AG04450 (cell line): ENCODE measurements at regions of chr6 and their contacts with region 1.

Region 1: DNA sequence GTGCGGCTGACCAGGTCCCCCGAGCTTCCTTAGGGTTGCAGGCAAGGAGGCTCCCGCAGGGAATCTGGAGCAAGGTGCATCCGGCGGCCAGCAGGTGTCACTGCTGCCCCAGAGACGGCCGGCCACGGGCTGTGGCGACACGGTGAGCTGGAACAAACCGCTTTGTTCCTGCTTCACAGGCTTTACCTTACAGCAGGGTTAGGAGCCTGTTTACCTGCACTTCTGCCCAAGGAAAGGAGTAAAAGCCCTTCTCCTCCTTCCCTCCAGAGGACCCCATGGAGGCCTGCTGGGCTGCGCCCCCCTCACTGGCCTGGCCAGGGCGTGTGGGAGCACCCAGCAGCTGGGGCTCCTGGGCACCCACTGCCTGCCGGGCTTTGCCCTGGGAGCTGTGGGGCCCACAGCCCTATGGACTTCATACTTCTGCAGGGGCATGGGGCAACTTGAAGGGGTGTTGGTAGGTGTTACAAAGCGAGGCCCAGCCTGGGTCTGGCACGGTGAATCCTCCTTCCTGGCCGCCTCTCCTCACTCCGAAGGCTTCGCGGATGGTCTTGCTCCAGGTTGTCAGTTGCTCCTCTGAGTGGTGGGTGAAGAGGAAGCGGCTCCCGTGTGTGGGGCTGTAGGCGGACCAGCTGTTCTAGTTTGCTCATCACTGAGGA is 88.4 kb downstream of the CDC5L start:
- DNase-seq: no peak
- H3K4me3 ChIP-seq: no peak overlapping the region
- H3K27ac ChIP-seq: no peak overlapping the region
- H3K27me3 ChIP-seq: peaks cover 26% of the 10 kb centered on the region
- CTCF ChIP-seq: peak; percentile 96

Region 2: DNA sequence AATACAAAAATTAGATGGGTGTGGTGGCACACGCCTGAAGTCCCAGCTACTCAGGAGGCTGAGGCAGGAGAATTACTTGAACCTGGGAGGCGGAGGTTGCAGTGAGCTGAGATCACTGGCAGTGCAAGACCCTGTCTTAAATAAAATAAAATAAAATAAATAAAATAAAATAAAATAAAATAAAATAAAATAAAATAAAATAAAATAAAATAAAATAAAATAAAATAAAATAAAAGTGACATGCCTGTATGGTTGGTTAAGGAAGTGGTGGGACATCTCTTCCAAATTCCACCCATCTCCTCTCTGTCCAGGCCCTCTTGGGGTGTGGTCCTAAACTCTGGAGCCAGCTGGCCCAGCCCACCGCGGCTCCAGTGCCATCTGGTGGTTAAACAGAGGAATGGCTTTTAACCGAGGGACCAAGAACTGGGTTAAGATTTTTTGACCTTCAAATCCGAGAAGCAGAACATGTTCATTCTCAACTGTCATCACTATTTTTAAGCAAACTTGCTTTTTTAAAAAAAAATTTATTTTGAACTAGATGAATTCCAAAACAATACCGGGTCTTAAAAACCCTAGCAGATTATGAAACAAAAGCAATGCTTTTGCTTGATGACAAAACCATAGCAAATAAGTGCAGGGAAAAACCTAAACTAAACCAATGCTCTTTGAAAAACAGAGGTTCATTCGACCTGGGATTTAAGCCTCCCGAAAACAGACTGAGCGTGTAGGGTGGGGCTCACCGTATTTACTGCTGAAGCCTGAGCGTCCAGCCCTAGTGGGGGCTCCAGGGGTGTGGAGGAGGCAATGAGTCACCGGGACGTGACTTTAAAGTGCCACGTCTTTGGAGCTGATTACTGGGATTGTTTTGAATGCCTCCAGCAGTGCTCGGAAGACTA is 19.6 kb before region 1 on chr6:
- CTCF ChIA-PET with region 1: interaction called, 40 read pairs
- POLR2A ChIA-PET with region 1: no interaction called
- DNase-seq: no peak
- H3K4me3 ChIP-seq: no peak overlapping the region
- H3K27ac ChIP-seq: no peak overlapping the region
- H3K27me3 ChIP-seq: no peaks in the 10 kb centered on the region
- CTCF ChIP-seq: peak; percentile 93

Region 3: DNA sequence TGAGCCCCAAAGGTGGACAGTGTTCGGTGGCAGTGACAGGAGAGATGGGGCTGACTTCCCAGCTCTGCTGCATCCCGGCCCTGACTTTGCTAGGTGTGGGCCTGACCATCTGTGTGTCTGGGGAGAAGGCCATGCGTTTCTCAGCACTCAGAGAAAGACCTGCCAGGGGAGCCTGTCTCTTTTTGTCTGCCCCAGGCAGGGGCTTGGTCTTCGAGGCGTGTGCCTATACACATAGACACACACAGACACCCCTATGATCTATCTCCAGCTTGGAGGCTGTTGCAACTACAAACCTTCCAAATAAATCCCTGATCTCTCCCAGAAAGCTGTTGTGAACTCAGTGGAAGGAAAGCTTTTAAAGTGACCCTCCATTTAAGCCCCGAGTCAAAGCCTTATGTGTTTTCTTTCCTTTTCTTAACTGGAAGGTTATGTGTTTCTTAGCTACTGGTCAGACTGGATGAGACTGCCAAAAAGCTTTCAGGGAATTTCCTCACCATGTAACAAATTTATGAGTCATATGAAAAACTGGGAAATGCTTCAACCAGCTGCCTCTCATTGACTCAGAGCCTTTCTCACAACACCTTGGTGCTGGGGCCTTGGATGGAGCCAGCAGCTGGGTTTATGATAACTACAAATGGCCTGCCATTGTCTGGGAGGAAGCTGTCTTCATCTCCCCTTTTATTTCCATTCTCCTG is 14.2 kb after region 1 on chr6:
- CTCF ChIA-PET with region 1: interaction called, 40 read pairs
- POLR2A ChIA-PET with region 1: no interaction called
- DNase-seq: peak; percentile 91
- H3K4me3 ChIP-seq: peak overlapping the region; percentile 38
- H3K27ac ChIP-seq: peak overlapping the region; percentile 94
- H3K27me3 ChIP-seq: peaks cover 2% of the 10 kb centered on the region
- CTCF ChIP-seq: no peak

Region 4: DNA sequence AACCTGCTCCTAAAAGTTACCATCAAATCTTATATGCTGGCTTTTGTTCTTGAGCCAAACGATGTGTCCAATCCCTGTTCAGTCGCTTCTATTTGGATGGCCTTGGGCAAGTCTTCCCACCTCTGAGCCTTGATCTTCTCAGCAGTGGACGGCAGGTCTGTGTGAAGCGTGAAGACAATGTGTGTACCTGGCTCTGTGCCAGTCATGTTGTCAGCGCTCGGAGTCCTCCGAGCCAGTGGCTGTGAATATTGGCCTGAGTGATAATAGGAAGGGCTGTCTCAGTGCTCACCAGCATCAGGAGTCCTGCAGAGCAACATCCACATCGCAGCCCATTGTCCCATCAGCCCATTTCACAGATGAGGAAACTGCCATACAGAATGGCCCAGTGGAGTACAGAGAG is 130.6 kb after region 1 on chr6:
- CTCF ChIA-PET with region 1: interaction called, 17 read pairs
- POLR2A ChIA-PET with region 1: no interaction called
- DNase-seq: no peak
- H3K4me3 ChIP-seq: no peak overlapping the region
- H3K27ac ChIP-seq: no peak overlapping the region
- H3K27me3 ChIP-seq: peaks cover 25% of the 10 kb centered on the region
- CTCF ChIP-seq: no peak

Region 5: DNA sequence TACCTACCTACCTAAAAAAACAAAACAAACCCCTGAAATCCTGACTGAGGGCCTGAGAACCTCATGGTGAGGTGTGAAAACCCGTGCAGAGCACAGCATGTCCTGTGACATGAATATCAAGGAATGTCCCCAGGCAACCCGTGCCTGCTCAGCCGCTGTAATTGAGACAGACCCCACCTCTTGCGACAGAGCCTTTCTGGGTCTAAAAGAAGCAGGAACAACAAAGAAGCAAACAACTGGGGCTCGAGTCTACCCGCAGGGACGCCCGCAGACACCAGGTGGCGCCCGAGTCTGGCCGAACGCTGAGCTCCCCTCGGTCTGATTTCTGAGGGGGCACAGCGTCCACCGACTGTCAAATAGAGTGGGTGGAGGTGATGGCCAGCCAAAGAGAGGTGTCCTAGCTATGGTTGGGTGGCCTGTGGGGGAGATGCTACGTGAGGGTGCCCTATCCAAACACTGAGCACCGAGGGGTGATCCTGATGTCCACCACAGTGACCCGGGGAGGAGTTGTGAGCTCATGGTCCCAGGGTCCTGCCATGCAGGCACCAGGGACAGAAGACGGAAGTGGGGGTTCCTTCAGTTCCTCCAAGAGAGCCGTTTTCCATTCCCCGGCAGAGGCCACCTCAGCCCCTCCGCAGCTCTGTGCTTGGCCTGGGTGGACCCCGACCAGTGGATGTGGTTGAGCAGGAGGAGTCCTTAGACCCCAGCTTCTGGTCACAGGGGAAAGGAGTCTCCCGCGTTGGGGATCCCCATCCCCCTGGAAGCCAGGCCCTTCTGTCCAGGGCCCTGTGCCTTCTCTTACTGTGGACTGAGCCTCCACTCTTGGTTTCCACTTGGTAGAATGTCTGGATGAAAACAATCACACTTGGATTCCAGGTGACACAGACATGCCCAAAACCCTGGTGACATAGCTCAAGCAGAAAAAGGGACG is 179.8 kb after region 1 on chr6:
- CTCF ChIA-PET with region 1: interaction called, 30 read pairs
- POLR2A ChIA-PET with region 1: no interaction called
- DNase-seq: no peak
- H3K4me3 ChIP-seq: no peak overlapping the region; the same call in 1 of the 2 replicates
- H3K27ac ChIP-seq: no peak overlapping the region
- H3K27me3 ChIP-seq: peaks cover 4% of the 10 kb centered on the region
- CTCF ChIP-seq: peak; percentile 92

Region 6: DNA sequence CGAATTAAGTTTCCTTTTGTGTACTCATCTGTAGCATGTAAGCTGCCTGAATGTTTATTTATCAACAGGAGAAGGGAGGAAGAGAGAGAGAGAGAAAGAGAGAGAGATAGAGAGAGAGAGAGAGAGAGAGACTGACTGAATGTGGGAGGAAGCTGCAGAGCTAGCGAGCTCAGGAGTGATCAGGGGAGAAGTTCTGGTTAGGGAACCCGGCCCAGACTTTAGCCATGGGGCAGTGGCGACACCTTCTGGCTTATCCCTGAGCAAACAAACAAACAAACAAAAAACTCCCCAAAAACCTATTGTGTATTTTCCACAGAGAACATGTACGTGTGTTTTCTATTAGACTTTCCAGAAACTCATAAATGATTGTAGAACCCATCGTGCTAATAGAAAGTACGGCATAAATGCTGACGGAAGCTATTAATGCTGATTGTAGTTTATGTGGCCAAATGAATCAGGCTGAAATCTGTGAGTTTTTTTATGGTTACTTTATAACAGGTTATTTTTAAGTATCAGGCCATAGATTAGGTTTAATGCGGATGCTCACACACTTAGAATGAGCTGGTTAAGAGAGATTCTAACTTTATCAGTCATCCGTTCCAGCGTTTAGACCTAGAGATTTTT is 1446.9 kb after region 1 on chr6:
- CTCF ChIA-PET with region 1: interaction called, 23 read pairs
- POLR2A ChIA-PET with region 1: no interaction called
- DNase-seq: peak; percentile 16
- H3K4me3 ChIP-seq: no peak overlapping the region
- H3K27ac ChIP-seq: no peak overlapping the region
- H3K27me3 ChIP-seq: no peaks in the 10 kb centered on the region
- CTCF ChIP-seq: peak; percentile 77